GM12878 (cell line): ENCODE measurements at regions of chr3 and their contacts with region 1.

Region 1: GRCh38 chr3:87949189-87949878 is 109.5 kb downstream of the CGGBP1 start:
- DNase-seq: peak; percentile 67
- ATAC-seq: peak; percentile 96
- H3K4me3 ChIP-seq: peak overlapping the region; percentile 18; the same call in 1 of the 2 replicates
- H3K27ac ChIP-seq: peak overlapping the region; percentile 20; the same call in 1 of the 2 replicates
- H3K4me1 ChIP-seq: no peaks in the 10 kb centered on the region; the same call in 1 of the 2 replicates
- H3K27me3 ChIP-seq: no peaks in the 10 kb centered on the region
- CTCF ChIP-seq: no peak
- EP300 ChIP-seq: peak in 1 of 2 experiments; percentile 22; a peak in 1 of 4 replicates
- POLR2A ChIP-seq: no peak
- RAD21 ChIP-seq: no peak

Region 2: GRCh38 chr3:87997298-87997697 is 48.0 kb after region 1 on chr3:
- CTCF ChIA-PET with region 1: no interaction called
- POLR2A ChIA-PET with region 1: no interaction called
- RAD21 ChIA-PET with region 1: no interaction called
- SMC1A ChIA-PET with region 1: no interaction called
- in situ Hi-C with region 1: no loop called
- intact Hi-C with region 1: loop called (anchors 1 kb)
- DNase-seq: peak; percentile 26
- ATAC-seq: peak; percentile 87
- H3K4me3 ChIP-seq: peak overlapping the region; percentile 18; the same call in 1 of the 2 replicates
- H3K27ac ChIP-seq: no peak overlapping the region
- H3K4me1 ChIP-seq: no peaks in the 10 kb centered on the region
- H3K27me3 ChIP-seq: no peaks in the 10 kb centered on the region
- CTCF ChIP-seq: no peak
- EP300 ChIP-seq: no peak
- POLR2A ChIP-seq: no peak
- RAD21 ChIP-seq: no peak